Left colon (tissue), 2 donors: ENCODE measurements at regions of chr17 and their contacts with region 1.

Region 1: GRCh38 chr17:38349097-38349730 is 2.4 kb upstream of the SOCS7 start:
- DNase-seq: peak; percentile 77 to 91
- ATAC-seq: peak; percentile 58

Region 2: DNA sequence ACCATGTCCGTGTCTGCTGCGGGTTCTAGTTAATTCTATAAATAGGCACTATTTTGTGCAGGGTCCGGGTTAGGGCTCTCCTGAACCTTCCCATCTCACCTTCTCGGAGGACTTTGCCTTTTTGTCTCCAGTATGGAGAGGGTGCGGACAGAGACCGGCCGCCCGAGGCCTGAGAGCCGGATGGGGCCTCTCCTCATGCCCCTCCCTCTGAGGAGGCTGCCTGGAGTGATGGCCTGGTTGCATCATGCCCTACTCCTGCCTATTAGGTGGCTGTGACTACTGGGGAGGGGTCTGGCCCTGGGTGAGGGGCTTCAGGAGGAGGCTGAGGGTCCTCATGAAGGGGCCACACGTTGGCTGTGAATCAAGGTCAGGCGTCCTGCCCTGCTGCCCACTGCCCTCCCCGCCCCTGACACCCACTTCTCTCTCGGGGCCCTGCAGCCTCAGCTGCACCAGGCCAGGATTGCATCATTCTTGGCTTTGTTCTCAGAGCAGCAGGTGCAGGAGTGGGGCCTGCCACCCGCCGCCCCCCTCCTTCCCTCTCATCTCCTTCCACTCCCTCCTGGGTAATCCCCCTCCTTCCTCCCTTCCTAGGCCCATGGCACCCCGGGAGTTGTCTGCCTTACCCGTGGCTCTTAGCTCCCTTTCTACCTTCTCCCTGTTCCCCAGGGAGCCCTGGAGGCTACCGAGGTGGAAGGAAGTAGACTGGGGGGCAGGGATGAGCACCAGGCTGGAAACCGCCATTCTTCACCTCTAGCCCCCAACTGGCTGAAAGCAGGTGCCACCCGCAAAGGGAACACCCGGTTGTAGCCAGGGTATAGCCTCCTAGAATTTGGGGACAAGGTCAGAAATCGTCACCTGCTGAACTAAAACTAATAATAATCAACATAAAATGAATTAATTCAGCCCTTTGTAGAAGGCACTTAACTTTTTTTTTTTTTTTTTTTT is 66.3 kb after region 1 on chr17:
- intact Hi-C with region 1: loop called (anchors 2 to 5 kb)
- DNase-seq: no peak
- ATAC-seq: peak; percentile 39